Activated naive CD4-positive, alpha-beta T cell treated with anti-CD3 and anti-CD28 coated beads, Interleukin-2, amount 10 ng/mL, durations not matched to agents 7 days and 5 days (primary cell): ENCODE measurements at regions of chr16 and their contacts with region 1.

Region 1: DNA sequence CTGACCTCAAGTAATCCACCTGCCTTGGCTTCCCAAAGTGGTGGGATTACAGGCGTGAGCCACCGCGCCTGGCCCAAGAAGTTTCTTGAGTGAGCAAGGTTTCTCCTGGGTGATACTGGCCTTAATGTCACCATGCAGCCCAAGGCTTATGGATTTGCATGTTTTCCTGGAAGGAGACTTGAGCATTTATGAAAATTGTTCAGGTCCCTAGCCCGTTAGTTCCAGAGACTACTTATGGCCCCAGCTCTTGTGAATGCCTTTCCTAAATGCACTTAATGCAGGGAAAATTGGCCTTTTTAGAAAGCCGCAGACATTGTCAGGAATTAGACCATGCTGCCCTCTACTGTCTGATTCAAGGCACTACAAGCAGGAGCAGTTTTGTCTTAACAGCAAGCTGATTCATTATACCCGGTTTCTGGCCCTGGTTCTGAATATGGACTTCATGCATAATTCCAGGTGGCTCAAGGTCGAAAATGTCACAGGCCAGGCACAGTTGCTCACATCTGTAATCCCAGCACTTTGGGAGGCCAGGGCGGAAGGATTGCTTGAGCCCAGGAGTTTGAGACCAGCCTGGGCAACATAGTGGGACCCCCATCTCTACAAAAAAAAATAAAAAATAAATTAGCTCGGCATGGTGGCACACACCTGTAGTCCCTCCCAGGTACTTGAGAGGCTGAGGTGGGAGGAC is 91.3 kb downstream of the SNX29 start:
- DNase-seq: peak; percentile 78
- H3K4me3 Mint-ChIP-seq: no peak overlapping the region
- H3K27ac Mint-ChIP-seq: no peak overlapping the region
- H3K4me1 Mint-ChIP-seq: peaks cover 5% of the 10 kb centered on the region
- H3K27me3 Mint-ChIP-seq: no peaks in the 10 kb centered on the region

Region 2: DNA sequence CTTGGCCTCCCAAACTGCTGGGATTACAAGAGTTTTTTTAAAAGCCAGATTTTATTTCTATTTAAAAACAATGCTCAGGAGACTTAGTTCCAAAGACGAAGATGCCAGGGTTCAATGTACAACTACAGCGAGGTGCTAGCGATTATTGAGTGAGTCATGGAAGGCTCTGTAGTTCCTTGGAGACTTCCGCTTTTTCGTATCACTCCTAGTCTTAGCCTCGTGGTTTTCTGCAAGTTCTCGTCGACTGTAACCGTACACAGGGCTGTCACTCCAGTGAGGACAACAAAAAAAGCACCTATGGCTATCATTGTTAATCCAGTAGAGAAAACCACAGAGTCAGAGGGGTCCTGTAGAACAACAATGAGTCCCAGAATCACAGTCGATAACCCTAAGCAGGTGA is 248.1 kb before region 1 on chr16:
- CTCF ChIA-PET with region 1: no interaction called
- DNase-seq: no peak
- H3K4me3 Mint-ChIP-seq: no peak overlapping the region
- H3K27ac Mint-ChIP-seq: no peak overlapping the region
- H3K4me1 Mint-ChIP-seq: no peaks in the 10 kb centered on the region
- H3K27me3 Mint-ChIP-seq: peaks cover 13% of the 10 kb centered on the region

Region 3: DNA sequence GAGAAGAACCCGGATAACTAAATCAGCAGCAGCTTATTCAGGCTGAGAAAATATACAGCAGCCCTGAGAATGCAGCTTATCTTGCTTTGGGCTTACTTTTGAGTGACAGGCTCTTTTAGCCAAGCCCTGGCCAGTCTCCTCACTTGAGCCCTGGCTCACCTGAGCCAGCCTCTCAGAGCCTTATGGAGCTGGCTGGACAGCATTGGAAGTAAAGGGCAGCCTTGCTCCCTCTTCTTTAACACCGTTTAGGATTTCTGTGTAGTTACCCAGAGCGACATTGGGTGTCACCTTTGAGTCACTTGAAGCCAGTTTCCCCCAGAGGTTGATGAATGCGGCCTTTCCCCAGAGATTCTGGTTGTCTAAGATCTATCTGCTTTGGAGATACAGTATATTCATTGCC is 118.3 kb before region 1 on chr16:
- CTCF ChIA-PET with region 1: interaction called, 25 read pairs
- DNase-seq: peak; percentile 42
- H3K4me3 Mint-ChIP-seq: no peak overlapping the region
- H3K27ac Mint-ChIP-seq: no peak overlapping the region
- H3K4me1 Mint-ChIP-seq: peaks cover 3% of the 10 kb centered on the region
- H3K27me3 Mint-ChIP-seq: peaks cover 13% of the 10 kb centered on the region

Region 4: DNA sequence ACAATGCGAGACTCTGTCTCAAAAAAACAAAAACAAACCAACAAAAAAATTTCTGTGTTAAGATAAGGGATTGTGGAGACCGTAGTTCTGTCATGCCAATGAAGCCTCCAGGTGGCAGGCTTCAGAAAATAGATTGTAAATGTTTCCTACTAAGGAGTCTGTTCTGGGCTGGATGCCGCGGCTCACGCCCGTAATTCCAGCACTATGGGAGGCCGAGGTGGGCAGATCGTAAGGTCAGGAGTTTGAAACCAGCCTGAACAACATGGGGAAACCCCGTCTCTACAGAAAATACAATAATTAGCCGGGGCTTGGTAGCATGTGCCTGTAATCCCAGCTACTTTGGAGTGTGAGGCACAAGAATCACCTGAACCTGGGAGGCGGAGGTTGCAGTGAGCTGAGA is 95.7 kb before region 1 on chr16:
- CTCF ChIA-PET with region 1: interaction called, 10 read pairs
- DNase-seq: no peak
- H3K4me3 Mint-ChIP-seq: no peak overlapping the region
- H3K27ac Mint-ChIP-seq: no peak overlapping the region
- H3K4me1 Mint-ChIP-seq: peaks cover 20% of the 10 kb centered on the region
- H3K27me3 Mint-ChIP-seq: no peaks in the 10 kb centered on the region

Region 5: DNA sequence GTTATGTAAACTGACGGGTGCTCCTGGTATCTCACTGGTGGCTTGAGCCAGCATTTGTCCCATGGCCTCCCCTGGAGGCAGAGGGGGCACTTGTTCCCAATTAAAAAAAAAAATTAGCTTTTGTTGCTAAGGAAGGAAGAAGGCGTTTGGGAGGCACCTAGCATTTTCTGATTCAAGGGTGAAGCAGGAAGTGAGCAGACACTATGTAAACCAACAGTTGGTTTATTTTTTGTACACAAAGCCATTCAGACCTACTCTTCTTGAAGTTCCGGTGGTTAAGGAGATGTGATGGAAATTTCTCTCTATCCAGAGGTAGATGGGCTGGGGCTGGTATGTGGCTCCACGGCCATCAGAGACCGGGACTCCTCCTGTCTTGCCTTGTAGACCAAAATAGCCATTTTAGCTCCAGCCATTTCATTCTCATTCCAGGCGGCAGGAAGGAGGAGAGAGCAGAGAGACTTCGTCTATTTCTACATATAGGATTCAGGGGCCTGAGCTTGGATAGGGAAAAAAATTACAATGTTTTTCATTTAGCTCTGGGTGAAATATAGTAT is 11.6 kb after region 1 on chr16:
- CTCF ChIA-PET with region 1: interaction called, 11 read pairs
- DNase-seq: peak; percentile 41
- H3K4me3 Mint-ChIP-seq: peak overlapping the region; percentile 58
- H3K27ac Mint-ChIP-seq: peak overlapping the region; percentile 96
- H3K4me1 Mint-ChIP-seq: peaks cover 88% of the 10 kb centered on the region
- H3K27me3 Mint-ChIP-seq: no peaks in the 10 kb centered on the region